Colonic mucosa (tissue), 4 donors: ENCODE measurements at regions of chr9 and their contacts with region 1.

Region 1: DNA sequence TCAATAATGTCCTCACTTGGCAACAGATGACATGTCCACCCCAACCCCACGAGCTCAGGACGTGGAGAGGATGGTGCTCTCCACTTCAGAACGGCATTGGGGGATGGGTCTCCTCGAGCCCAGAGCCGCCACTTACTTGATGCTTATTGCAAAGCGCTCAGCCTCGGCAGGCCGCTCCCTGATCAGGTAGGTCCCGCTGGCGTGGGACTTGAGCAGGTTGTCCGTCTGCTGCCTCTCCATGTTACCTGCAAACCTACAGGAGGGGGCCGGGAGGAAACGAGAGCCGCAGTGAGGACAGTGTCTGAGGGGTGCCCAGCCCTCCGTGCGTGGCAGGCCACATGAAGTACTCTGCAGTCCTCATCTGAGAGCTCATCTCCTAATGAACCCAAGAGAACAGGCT is 36.6 kb upstream of the SARDH start:
- DNase-seq: no peak
- H3K4me3 ChIP-seq: no peak overlapping the region
- H3K27ac ChIP-seq: no peak overlapping the region
- H3K4me1 ChIP-seq: no peaks in the 10 kb centered on the region
- H3K27me3 ChIP-seq: no peaks in the 10 kb centered on the region
- CTCF ChIP-seq: no peak

Region 2: GRCh38 chr9:134111064-134111463 is 336.3 kb after region 1 on chr9:
- intact Hi-C with region 1: loop called (anchors 5 kb)
- DNase-seq: no peak
- H3K4me3 ChIP-seq: no peak overlapping the region
- H3K27ac ChIP-seq: no peak overlapping the region
- H3K4me1 ChIP-seq: no peaks in the 10 kb centered on the region
- H3K27me3 ChIP-seq: no peaks in the 10 kb centered on the region
- CTCF ChIP-seq: no peak